ENCODE measurements at regions of chr2 and their contacts with region 1.

Region 1: DNA sequence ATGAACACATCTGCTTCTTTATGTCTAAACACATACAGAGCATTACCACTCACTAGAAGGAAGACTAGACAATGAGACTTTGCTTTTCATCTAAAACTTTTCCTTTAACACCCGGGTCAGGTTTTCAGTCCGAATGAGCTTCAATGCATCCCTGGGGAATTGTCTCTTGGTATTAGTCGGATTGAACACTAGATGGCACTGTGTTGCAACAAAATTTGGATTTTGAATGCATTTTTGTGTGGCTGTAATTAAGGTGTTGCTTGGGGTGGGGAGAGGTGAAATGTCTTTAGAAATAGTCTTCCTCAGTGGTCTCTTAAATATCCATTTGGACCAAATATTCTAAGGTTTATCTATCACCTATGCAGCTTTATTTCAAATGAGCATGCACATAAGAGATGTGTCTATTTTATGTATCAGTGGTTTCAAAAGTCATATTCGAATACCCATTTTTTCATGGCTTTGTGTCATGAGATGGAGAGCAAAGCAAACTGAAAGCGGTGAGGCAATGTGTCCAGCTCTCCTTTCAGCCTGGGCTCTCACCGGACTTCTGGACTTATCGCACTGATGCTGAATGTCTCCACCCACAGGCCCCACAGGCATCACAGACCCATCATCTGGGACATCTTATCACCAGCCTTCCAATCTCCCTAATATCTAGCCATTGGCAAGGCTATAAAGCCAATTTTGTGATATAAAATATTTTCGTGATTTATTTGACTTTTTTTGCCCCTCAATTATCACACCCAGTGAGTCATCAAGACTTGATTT is 510.3 kb downstream of the RNF144A start:
- DNase-seq: no peak
- ATAC-seq: peak in 1 of 2 donors; percentile 46

Region 2: GRCh38 chr2:8693155-8693821 is 1265.8 kb after region 1 on chr2:
- intact Hi-C with region 1: loop called in 1 of 2 experiments (anchors 10 kb)
- DNase-seq: peak; percentile 47
- ATAC-seq: peak; percentile 65 to 79

Measured in left cardiac atrium (tissue), 4 donors.